ENCODE measurements at regions of chr3 and their contacts with region 1.

Region 1: GRCh38 chr3:195909644-195910508 is 1.5 kb upstream of the TNK2 start:
- DNase-seq: peak; percentile 86 to 91 (median 88)
- H3K4me3 ChIP-seq: peak overlapping the region; percentile 71
- H3K27ac ChIP-seq: peak overlapping the region in 1 of 2 donors; percentile 38
- H3K4me1 ChIP-seq: peaks cover 11% of the 10 kb centered on the region
- H3K27me3 ChIP-seq: no peaks in the 10 kb centered on the region
- CTCF ChIP-seq: no peak
- EP300 ChIP-seq: no peak
- POLR2A ChIP-seq: no peak

Region 2: DNA sequence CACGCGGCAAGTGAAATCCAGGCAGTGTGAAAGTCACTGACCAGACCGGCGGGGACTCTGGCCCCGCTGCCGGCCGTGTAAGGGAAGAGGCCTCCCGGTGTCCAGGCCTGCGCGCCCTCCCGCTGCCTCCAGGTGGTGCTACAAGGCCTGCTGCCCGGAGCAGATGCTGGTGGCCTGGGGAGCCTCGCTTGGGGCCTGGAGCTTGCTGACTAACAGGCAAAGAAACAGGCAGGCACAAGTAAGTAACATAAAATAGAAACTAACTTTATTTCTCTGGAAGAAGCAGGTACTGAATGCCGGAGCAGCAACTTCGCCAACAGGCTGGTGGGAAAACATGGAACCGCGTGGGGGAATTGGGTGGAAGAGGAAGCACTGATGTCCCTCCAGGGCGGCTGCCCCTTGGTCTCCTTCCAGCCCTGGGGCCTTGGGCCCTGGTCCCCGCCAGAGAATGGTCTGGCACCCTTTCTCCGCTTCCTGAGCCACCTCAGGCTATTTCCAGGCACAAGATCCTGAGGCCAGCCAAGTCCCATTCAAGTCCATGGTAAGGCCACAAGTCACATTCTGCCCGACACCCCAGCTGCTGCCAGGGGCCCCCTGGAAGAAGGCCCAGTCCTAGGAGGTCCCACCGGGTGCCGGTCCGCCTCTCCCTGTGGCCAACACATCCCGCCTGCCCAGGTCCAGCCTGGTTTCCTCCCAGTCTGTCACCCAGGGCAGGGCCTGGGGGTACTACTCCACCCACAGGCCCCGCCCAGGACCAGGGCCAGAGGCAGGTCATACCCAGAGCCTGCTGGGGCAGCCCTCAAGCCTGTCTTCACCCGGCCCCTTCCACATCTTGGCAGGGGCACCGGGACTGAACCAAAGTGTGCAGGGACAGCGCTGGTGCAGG is 46.5 kb before region 1 on chr3:
- intact Hi-C with region 1: loop called in 2 of 4 experiments (anchors 2 to 5 kb)
- DNase-seq: peak; percentile 84 to 93 (median 90)
- H3K4me3 ChIP-seq: no peak overlapping the region
- H3K27ac ChIP-seq: no peak overlapping the region
- H3K4me1 ChIP-seq: no peaks in the 10 kb centered on the region
- H3K27me3 ChIP-seq: no peaks in the 10 kb centered on the region
- CTCF ChIP-seq: peak; percentile 80 to 89 (median 86)
- EP300 ChIP-seq: no peak
- POLR2A ChIP-seq: no peak

Region 3: DNA sequence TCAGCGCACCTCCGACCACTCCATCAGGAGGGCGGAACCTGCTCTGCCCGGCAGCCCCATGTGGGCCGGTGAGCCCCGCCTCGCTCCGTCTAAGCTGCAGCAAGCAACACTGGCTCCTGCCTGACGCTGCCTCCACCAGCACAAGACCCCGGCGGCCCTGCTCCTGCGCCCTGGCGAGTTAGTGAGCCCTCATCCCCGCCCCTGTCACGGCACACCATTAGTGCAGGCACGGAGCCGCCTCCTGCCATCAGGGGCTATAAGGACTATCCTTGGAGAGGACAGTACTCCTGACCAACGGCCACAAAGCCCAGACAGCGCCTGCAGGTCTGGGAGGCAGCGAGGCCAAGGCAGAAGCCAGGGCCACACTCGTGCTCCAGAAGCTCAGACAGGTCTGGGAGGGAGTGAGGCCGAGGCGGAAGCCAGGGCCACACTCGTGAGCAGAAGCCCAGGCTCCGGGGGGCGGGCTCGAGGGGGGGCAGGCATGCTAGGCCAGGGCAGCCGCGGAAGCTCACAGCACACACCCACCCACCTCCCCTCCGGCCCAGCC is 40.9 kb before region 1 on chr3:
- intact Hi-C with region 1: loop called in 1 of 4 experiments (anchors 5 kb)
- DNase-seq: no peak
- H3K4me3 ChIP-seq: no peak overlapping the region
- H3K27ac ChIP-seq: no peak overlapping the region
- H3K4me1 ChIP-seq: no peaks in the 10 kb centered on the region
- H3K27me3 ChIP-seq: no peaks in the 10 kb centered on the region
- CTCF ChIP-seq: no peak
- EP300 ChIP-seq: no peak
- POLR2A ChIP-seq: no peak

Region 4: DNA sequence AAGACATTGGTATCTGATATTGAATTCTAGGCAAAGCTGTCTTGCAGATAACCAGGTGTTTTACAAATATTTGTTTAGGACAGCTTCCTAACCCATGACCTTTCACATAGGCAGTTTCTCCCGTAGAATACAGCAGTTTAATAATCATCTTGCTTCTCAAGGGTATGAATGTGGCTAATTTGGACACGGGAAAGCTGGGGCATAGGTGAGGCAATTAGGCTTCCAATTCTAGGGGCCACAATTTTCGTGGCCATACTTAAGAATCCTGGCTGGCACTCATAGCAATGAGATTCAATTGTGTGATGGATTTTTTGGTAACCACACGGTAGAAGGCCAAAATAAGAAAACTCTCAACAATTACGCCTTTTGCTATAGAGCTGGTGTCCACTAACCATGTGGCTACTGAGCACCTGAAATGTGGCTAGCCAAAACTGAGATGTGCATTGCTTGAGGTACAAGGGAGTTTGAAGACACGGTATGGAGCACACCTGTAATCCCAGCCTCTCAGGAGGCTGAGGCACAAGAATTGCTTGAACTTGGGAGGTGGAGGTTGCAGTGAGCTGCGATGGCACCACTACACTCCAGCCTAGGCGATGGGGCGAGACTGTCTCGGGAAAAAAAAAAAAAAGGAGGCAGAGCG is 137.6 kb after region 1 on chr3:
- intact Hi-C with region 1: no loop called
- DNase-seq: no peak
- H3K4me3 ChIP-seq: no peak overlapping the region
- H3K27ac ChIP-seq: no peak overlapping the region
- H3K4me1 ChIP-seq: no peaks in the 10 kb centered on the region
- H3K27me3 ChIP-seq: no peaks in the 10 kb centered on the region
- CTCF ChIP-seq: no peak
- EP300 ChIP-seq: no peak
- POLR2A ChIP-seq: no peak